Ovary (tissue), 10 donors: ENCODE measurements at regions of chr15 and their contacts with region 1.

Region 1: GRCh38 chr15:48963524-48964113 is at the start of gene SHC4:
- DNase-seq: peak; percentile 42 to 67 (median 62)
- H3K4me3 ChIP-seq: peak within 1 kb of the TSS; percentile 27
- H3K27ac ChIP-seq: no peak within 1 kb of the TSS
- H3K4me1 ChIP-seq: peaks cover 2% of the 10 kb centered on the region
- H3K27me3 ChIP-seq: no peaks in the 10 kb centered on the region
- CTCF ChIP-seq: no peak
- EP300 ChIP-seq: no peak
- POLR2A ChIP-seq: no peak
- total RNA-seq, gene SHC4: 0.10 to 0.79 (median 0.33) TPM

Region 2: GRCh38 chr15:48899793-48900192 is 63.8 kb before region 1 on chr15:
- intact Hi-C with region 1: loop called in 1 of 4 experiments (anchors 10 kb)
- DNase-seq: no peak
- H3K4me3 ChIP-seq: no peak overlapping the region
- H3K27ac ChIP-seq: no peak overlapping the region
- H3K4me1 ChIP-seq: no peaks in the 10 kb centered on the region
- H3K27me3 ChIP-seq: no peaks in the 10 kb centered on the region
- CTCF ChIP-seq: no peak
- EP300 ChIP-seq: no peak
- POLR2A ChIP-seq: no peak